MCF 10A (cell line): ENCODE measurements at regions of chr17 and their contacts with region 1.

Region 1: GRCh38 chr17:73429440-73430164 is 117.8 kb upstream of the CDC42EP4 start:
- DNase-seq: peak; percentile 77
- H3K4me3 Mint-ChIP-seq: no peak overlapping the region
- H3K27ac Mint-ChIP-seq: no peak overlapping the region
- H3K4me1 Mint-ChIP-seq: no peaks in the 10 kb centered on the region
- H3K27me3 Mint-ChIP-seq: no peaks in the 10 kb centered on the region
- CTCF ChIP-seq: peak; percentile 95

Region 2: GRCh38 chr17:73247726-73248125 is 181.9 kb before region 1 on chr17:
- CTCF ChIA-PET with region 1: no interaction called
- POLR2A ChIA-PET with region 1: no interaction called
- intact Hi-C with region 1: no loop called
- DNase-seq: no peak
- H3K4me3 Mint-ChIP-seq: no peak overlapping the region
- H3K27ac Mint-ChIP-seq: no peak overlapping the region
- H3K4me1 Mint-ChIP-seq: no peaks in the 10 kb centered on the region
- H3K27me3 Mint-ChIP-seq: no peaks in the 10 kb centered on the region
- CTCF ChIP-seq: no peak

Region 3: DNA sequence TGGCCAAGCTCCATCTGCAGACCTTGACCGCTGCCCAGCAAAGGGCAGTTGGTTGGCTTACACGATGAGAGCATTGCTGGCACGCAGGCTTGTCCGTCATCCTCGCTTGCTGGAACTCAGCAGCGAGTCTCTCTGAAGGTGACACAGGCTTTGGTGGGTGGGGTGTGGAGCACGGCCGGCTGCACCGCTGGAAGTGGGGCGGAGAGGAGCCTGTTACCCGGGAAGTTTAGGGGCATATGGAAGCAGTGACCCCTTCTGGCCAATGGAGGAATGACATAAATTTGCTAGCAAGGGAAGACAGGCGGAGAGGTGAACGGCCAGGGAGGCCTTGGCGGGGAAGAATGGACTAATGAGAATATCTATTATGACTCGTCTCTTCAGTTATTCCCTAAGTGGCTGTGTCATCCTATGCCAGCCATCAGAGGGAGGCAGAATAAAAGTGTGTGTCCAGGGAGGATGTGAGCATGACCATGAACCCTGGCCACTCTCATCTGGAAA is 280.5 kb after region 1 on chr17:
- CTCF ChIA-PET with region 1: interaction called, 41 read pairs
- POLR2A ChIA-PET with region 1: no interaction called
- intact Hi-C with region 1: loop called (anchors 1 kb)
- DNase-seq: peak; percentile 56
- H3K4me3 Mint-ChIP-seq: no peak overlapping the region
- H3K27ac Mint-ChIP-seq: no peak overlapping the region
- H3K4me1 Mint-ChIP-seq: no peaks in the 10 kb centered on the region
- H3K27me3 Mint-ChIP-seq: peaks cover 37% of the 10 kb centered on the region
- CTCF ChIP-seq: peak; percentile 82

Region 4: GRCh38 chr17:73956669-73957465 is 527.3 kb after region 1 on chr17:
- CTCF ChIA-PET with region 1: interaction called, 3 read pairs
- POLR2A ChIA-PET with region 1: no interaction called
- intact Hi-C with region 1: loop called (anchors 1 kb)
- DNase-seq: peak; percentile 62
- H3K4me3 Mint-ChIP-seq: no peak overlapping the region
- H3K27ac Mint-ChIP-seq: no peak overlapping the region
- H3K4me1 Mint-ChIP-seq: no peaks in the 10 kb centered on the region
- H3K27me3 Mint-ChIP-seq: peaks cover 26% of the 10 kb centered on the region
- CTCF ChIP-seq: peak; percentile 48

Region 5: DNA sequence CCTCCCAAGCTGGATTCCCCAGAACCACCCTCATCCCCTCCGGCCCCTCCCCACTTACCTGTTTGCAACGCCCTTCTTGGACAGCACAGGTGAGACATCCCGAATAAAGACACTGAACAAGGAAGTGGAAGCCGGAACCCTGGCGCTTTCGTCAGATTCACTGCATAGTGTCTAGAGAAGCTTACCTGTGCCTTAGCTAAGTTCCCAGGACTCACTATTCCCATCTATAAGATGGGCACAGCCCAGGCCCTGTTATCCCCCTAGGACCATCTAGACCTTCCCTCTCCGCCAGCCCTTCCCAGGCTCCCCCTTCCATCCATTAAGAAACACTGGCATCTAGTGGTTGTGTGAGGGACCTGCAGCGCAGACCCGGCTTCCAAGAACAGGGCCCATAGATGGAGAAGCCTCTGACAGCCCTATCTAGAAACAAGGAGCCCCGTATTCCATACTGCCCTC is 747.0 kb after region 1 on chr17:
- CTCF ChIA-PET with region 1: interaction called, 57 read pairs
- POLR2A ChIA-PET with region 1: no interaction called
- intact Hi-C with region 1: no loop called
- DNase-seq: peak; percentile 67
- H3K4me3 Mint-ChIP-seq: no peak overlapping the region
- H3K27ac Mint-ChIP-seq: no peak overlapping the region
- H3K4me1 Mint-ChIP-seq: peaks cover 6% of the 10 kb centered on the region
- H3K27me3 Mint-ChIP-seq: peaks cover 64% of the 10 kb centered on the region
- CTCF ChIP-seq: peak; percentile 89